ENCODE measurements at regions of chr4 and their contacts with region 1.

Region 1: GRCh38 chr4:38730830-38731646 is 51.8 kb downstream of the TLR10 start:
- DNase-seq: peak; percentile 76 to 90 (median 79)
- ATAC-seq: peak; percentile 78 to 91 (median 89)
- H3K4me3 ChIP-seq: no peak overlapping the region
- H3K27ac ChIP-seq: no peak overlapping the region
- H3K4me1 ChIP-seq: peaks cover 0 to 21% (median 4%) of the 10 kb centered on the region in 12 donors
- H3K27me3 ChIP-seq: no peaks in the 10 kb centered on the region
- CTCF ChIP-seq: peak; percentile 88 to 98 (median 96)
- POLR2A ChIP-seq: no peak

Region 2: DNA sequence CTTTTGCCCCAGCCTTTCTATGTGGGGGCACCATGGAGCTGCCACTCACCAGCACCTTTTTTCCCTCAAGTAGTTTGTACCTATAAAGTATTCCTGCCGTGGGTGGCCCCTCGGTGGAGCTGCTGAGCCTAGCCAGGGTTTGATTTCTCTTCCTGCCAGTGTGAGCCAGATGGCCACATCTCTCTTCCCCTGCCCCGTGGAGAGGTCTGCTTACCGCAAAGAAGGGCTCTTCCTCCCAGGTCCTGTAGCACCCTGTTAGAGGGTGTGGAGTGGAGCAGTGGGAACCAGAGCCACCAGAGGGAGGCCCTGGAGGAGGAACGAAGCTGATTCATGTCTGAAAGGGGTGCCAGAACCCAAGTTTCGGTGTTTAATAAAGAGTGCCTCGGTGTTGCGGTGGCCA is 675.5 kb before region 1 on chr4:
- intact Hi-C with region 1: loop called in 4 of 10 experiments (anchors 2 to 5 kb)
- DNase-seq: no peak
- ATAC-seq: peak; percentile 18 to 51 (median 26)
- H3K4me3 ChIP-seq: peak overlapping the region in 5 of 12 donors; percentile 6 to 15 (median 8)
- H3K27ac ChIP-seq: peak overlapping the region in 11 of 12 donors; percentile 18 to 82 (median 72)
- H3K4me1 ChIP-seq: peaks cover 0 to 39% (median 25%) of the 10 kb centered on the region in 12 donors
- H3K27me3 ChIP-seq: no peaks in the 10 kb centered on the region
- CTCF ChIP-seq: peak in 4 of 12 donors; percentile 7 to 26 (median 14)
- POLR2A ChIP-seq: no peak

Region 3: DNA sequence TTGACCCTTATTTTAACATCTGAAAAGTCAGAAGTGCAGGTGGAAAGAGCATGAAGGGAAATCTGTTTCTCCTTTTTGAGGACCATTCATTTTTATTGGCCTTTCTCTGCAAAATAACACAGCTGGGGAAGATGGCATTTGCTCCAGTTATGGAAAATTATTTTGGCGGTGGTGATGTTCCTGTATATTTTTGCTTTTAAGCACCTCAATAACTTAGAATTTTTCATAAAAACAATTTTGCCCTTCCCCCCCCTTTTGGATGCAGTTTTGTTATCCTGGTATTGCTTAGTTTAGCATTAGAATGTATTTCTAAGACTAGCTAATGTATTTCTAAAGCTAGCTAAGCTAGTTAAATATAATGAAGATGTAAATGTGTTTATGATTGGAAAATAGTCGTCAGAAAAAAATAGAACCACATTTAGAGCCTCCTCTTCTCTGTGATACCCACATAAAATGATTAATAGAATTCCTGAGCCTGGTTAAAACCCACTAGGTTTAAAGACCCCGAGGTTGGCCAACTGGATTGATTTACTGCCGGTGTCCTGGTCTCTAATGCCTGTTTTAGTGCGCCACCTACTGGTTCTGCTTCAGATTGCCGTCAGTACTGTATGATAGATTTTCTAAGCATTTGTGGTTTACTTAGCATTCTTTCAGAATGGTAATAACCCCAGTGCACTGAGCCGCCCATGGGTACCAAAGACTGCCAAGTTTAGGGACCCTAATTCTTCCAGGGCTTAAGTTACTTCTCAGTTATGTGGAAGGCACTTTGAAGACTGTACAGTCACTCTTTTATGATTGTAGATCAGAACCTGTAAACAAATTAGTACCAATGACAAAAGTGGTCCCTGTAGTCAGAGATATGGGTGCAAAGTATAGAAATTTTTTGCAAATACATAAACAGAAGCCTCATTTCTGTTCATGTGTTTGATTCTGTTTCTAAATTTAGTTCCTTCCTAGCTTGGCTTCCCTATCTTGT is 55.6 kb before region 1 on chr4:
- intact Hi-C with region 1: loop called in 4 of 10 experiments (anchors 5 kb)
- DNase-seq: peak in 4 of 5 donors; percentile 68 to 78 (median 76)
- ATAC-seq: peak in 3 of 4 donors; percentile 40 to 45 (median 42)
- H3K4me3 ChIP-seq: peak overlapping the region in 4 of 12 donors; percentile 2 to 42 (median 18)
- H3K27ac ChIP-seq: peak overlapping the region in 10 of 12 donors; percentile 97 to 100 (median 99)
- H3K4me1 ChIP-seq: peaks cover 30 to 91% (median 81%) of the 10 kb centered on the region in 12 donors
- H3K27me3 ChIP-seq: no peaks in the 10 kb centered on the region
- CTCF ChIP-seq: peak; percentile 84 to 97 (median 92)
- POLR2A ChIP-seq: no peak

Region 4: DNA sequence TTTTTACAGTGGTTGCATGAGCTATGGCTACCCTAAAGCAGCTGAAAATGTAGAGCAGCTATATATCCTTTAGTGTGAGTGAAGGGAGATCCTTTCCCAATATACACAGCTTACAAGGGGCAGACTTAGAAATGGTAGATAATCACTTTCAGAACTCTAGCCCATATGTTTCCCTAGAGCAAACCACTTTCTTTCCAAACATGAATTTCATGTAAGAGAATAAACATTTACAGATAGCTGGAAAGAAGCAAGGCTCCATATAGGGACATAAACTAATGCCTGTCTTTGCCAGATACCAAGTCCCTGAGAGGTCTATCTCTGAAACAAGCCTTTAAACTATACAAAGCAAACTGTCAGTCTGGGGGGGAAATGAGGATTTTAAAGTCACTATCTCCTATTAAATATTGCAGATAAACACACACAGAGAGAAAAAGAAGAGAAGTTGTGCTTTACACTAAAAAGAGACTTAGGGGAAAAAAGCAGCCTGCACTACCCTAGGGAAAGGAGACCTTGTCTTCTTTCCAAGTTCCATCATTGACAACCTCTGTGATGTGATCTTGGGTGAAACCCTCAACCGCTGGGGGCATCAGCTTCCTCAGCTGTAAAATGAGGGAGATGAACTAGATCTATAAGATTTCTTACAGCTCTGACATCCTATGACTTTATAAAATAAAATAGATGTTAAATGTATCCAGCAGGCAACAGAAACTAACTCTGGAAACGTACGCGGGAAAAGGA is 227.6 kb after region 1 on chr4:
- intact Hi-C with region 1: no loop called
- DNase-seq: no peak
- ATAC-seq: no peak
- H3K4me3 ChIP-seq: no peak overlapping the region
- H3K27ac ChIP-seq: peak overlapping the region in 1 of 12 donors; percentile 15
- H3K4me1 ChIP-seq: no peaks in the 10 kb centered on the region
- H3K27me3 ChIP-seq: no peaks in the 10 kb centered on the region
- CTCF ChIP-seq: no peak
- POLR2A ChIP-seq: no peak

Measured in heart left ventricle (tissue), 16 donors.